Naive thymus-derived CD4-positive, alpha-beta T cell (primary cell): ENCODE measurements at regions of chr3 and their contacts with region 1.

Region 1: GRCh38 chr3:181230258-181230657 is 240.7 kb upstream of the DNAJC19 start:
- DNase-seq: no peak
- ATAC-seq: no peak
- H3K4me3 ChIP-seq: no peak overlapping the region
- H3K4me3 Mint-ChIP-seq: no peak overlapping the region
- H3K27ac ChIP-seq: no peak overlapping the region
- H3K27ac Mint-ChIP-seq: no peak overlapping the region
- H3K4me1 ChIP-seq: no peaks in the 10 kb centered on the region
- H3K4me1 Mint-ChIP-seq: no peaks in the 10 kb centered on the region
- H3K27me3 ChIP-seq: no peaks in the 10 kb centered on the region
- H3K27me3 Mint-ChIP-seq: peaks cover 0 to 6% (median 3%) of the 10 kb centered on the region in 5 donors

Region 2: GRCh38 chr3:181252631-181253030 is 22.4 kb after region 1 on chr3:
- CTCF ChIA-PET with region 1: no interaction called
- POLR2A ChIA-PET with region 1: no interaction called
- intact Hi-C with region 1: no loop called
- DNase-seq: no peak
- ATAC-seq: no peak
- H3K4me3 ChIP-seq: no peak overlapping the region
- H3K4me3 Mint-ChIP-seq: no peak overlapping the region
- H3K27ac ChIP-seq: no peak overlapping the region
- H3K27ac Mint-ChIP-seq: no peak overlapping the region
- H3K4me1 ChIP-seq: no peaks in the 10 kb centered on the region
- H3K4me1 Mint-ChIP-seq: no peaks in the 10 kb centered on the region
- H3K27me3 ChIP-seq: no peaks in the 10 kb centered on the region
- H3K27me3 Mint-ChIP-seq: peaks cover 0 to 7% (median 0%) of the 10 kb centered on the region in 5 donors

Region 3: GRCh38 chr3:181354140-181354539 is 123.9 kb after region 1 on chr3:
- CTCF ChIA-PET with region 1: no interaction called
- POLR2A ChIA-PET with region 1: no interaction called
- intact Hi-C with region 1: no loop called
- DNase-seq: no peak
- ATAC-seq: no peak
- H3K4me3 ChIP-seq: no peak overlapping the region
- H3K4me3 Mint-ChIP-seq: no peak overlapping the region
- H3K27ac ChIP-seq: no peak overlapping the region
- H3K27ac Mint-ChIP-seq: no peak overlapping the region
- H3K4me1 ChIP-seq: no peaks in the 10 kb centered on the region
- H3K4me1 Mint-ChIP-seq: no peaks in the 10 kb centered on the region
- H3K27me3 ChIP-seq: no peaks in the 10 kb centered on the region
- H3K27me3 Mint-ChIP-seq: no peaks in the 10 kb centered on the region

Region 4: GRCh38 chr3:182769673-182770072 is 1539.4 kb after region 1 on chr3:
- CTCF ChIA-PET with region 1: no interaction called
- POLR2A ChIA-PET with region 1: interaction called, 10 read pairs
- intact Hi-C with region 1: no loop called
- DNase-seq: no peak
- ATAC-seq: no peak
- H3K4me3 ChIP-seq: no peak overlapping the region
- H3K4me3 Mint-ChIP-seq: no peak overlapping the region
- H3K27ac ChIP-seq: no peak overlapping the region
- H3K27ac Mint-ChIP-seq: no peak overlapping the region
- H3K4me1 ChIP-seq: no peaks in the 10 kb centered on the region
- H3K4me1 Mint-ChIP-seq: no peaks in the 10 kb centered on the region
- H3K27me3 ChIP-seq: no peaks in the 10 kb centered on the region
- H3K27me3 Mint-ChIP-seq: peaks cover 0 to 50% (median 3%) of the 10 kb centered on the region in 5 donors